ENCODE measurements at regions of chr19 and their contacts with region 1.

Region 1: DNA sequence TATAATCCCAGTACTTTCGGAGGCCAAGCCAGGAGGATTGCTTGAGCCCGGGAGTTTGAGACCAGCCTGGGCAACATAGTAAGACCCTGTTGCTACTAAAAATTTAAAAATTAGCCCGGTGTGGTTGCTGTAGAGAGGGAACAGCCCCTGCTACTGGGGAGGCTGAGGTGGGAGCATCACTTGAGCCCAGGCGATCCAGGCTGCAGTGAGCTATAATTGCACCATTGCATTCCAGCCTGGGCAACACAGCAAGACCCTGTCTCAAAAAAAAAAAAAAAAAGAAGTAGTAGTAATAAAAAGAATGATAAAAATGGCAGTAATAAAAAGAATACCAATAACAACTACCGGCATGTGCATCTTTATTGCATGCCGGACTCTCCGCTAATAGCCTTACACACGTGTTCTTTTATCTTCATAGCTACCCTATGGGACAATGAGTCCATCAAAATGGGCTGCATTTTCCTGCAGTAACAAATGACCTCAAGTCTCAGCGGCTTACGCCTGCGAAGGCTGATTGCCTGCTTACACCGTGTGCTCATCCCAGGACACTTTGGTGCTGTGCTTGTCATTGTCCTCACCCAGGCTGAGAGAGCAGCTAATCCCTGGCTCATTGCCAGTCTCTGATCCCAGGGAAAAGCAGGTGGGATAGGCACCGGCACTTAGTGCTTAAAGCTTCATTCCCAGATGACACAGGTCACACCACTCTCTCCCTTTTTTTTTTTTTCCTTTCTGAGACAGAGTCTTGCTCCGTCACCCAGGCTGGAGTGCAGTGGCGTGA is 14.4 kb upstream of the SYCN start:
- DNase-seq: no peak
- ATAC-seq: 0 out of 2 replicates have a peak, but pooled peaks have one; percentile 8
- H3K4me3 ChIP-seq: no peak overlapping the region
- H3K27ac ChIP-seq: no peak overlapping the region
- H3K4me1 ChIP-seq: no peaks in the 10 kb centered on the region
- H3K27me3 ChIP-seq: peaks cover 10% of the 10 kb centered on the region
- CTCF ChIP-seq: no peak

Region 2: DNA sequence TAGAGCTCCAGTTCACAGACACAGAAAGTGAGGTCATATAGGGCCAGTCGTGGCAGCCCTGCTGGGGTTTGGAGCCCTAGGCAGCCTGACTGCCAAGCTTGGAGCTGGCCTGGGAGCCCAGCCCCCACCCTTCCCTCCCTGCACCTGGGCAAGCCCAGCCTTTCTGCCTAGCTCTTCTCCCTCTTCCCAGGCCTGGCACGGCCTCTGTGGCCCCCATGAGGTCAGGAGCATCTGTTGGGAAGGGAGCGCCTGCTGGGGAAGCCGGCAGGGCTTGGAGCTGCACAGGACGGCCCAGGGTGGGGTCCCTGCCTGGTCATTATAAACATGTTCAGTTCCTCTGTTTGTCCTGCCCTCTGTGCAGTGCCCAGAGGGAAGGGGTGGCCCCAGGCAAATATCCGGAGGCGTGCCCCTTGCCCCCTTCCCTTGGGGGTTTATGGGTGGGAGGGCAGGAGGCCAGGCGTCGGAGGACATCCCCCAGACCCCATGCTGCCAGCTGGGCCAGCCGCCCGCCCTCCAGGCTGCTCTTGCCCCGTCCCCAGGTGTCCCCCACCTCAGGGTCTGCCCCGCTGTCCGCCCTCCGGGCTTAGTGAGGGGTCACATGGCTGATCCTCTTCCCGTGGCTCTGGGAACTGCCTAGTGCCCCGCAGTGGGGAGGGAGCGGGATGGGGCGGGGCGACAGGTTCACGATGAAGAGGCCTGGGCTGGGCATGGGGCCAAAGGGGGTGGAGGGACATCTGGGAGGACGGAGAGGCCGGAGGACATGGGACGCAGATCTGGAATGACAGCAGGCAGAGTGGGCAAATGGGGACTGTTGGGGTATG is 51.6 kb before region 1 on chr19:
- CTCF ChIA-PET with region 1: no interaction called
- POLR2A ChIA-PET with region 1: interaction called, 11 read pairs
- in situ Hi-C with region 1: no loop called
- intact Hi-C with region 1: no loop called
- DNase-seq: no peak
- ATAC-seq: peak; percentile 65
- H3K4me3 ChIP-seq: no peak overlapping the region
- H3K27ac ChIP-seq: no peak overlapping the region
- H3K4me1 ChIP-seq: peaks cover 33% of the 10 kb centered on the region
- H3K27me3 ChIP-seq: no peaks in the 10 kb centered on the region
- CTCF ChIP-seq: no peak

Region 3: DNA sequence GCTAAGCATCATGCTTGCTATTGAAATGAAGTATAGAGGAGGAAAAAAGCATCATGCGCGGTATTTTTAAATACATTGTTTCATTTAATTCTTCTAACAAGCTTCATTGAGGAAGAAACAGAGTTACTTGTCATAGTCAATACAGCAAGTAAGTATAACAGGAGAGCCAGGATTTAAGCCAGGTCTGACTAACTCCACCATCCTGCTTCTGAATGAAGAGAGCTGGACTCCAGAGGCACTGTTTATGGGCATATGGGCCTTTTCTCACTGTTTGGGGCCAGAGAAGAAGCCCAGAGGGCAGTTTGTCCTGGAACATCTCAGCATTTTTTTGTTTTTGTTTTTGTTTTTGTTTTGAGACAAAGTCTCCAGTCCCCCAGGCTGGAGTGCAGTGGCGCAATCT is 131.7 kb after region 1 on chr19:
- CTCF ChIA-PET with region 1: no interaction called
- POLR2A ChIA-PET with region 1: no interaction called
- in situ Hi-C with region 1: no loop called
- intact Hi-C with region 1: no loop called
- DNase-seq: no peak
- ATAC-seq: no peak
- H3K4me3 ChIP-seq: no peak overlapping the region
- H3K27ac ChIP-seq: no peak overlapping the region
- H3K4me1 ChIP-seq: peaks cover 12% of the 10 kb centered on the region
- H3K27me3 ChIP-seq: no peaks in the 10 kb centered on the region
- CTCF ChIP-seq: no peak

Measured in Panc1 (cell line).